ENCODE measurements at regions of chr9 and their contacts with region 1.

Region 1: GRCh38 chr9:137445275-137445807 is 4.2 kb upstream of the ENTPD8 start:
- DNase-seq: peak; percentile 76 to 93
- H3K4me3 ChIP-seq: no peak overlapping the region
- H3K27ac ChIP-seq: no peak overlapping the region
- H3K4me1 ChIP-seq: peaks cover 18% of the 10 kb centered on the region
- H3K27me3 ChIP-seq: no peaks in the 10 kb centered on the region
- CTCF ChIP-seq: peak; percentile 93

Region 2: GRCh38 chr9:136424750-136425362 is 1020.5 kb before region 1 on chr9:
- CTCF ChIA-PET with region 1: no interaction called
- POLR2A ChIA-PET with region 1: interaction called, 14 read pairs
- intact Hi-C with region 1: no loop called
- DNase-seq: no peak
- H3K4me3 ChIP-seq: no peak overlapping the region
- H3K27ac ChIP-seq: no peak overlapping the region
- H3K4me1 ChIP-seq: no peaks in the 10 kb centered on the region
- H3K27me3 ChIP-seq: no peaks in the 10 kb centered on the region
- CTCF ChIP-seq: no peak

Region 3: GRCh38 chr9:137286975-137287383 is 158.4 kb before region 1 on chr9:
- CTCF ChIA-PET with region 1: interaction called, 17 read pairs
- POLR2A ChIA-PET with region 1: no interaction called
- intact Hi-C with region 1: no loop called
- DNase-seq: peak; percentile 63 to 69
- H3K4me3 ChIP-seq: no peak overlapping the region
- H3K27ac ChIP-seq: no peak overlapping the region
- H3K4me1 ChIP-seq: no peaks in the 10 kb centered on the region
- H3K27me3 ChIP-seq: no peaks in the 10 kb centered on the region
- CTCF ChIP-seq: peak; percentile 74

Region 4: DNA sequence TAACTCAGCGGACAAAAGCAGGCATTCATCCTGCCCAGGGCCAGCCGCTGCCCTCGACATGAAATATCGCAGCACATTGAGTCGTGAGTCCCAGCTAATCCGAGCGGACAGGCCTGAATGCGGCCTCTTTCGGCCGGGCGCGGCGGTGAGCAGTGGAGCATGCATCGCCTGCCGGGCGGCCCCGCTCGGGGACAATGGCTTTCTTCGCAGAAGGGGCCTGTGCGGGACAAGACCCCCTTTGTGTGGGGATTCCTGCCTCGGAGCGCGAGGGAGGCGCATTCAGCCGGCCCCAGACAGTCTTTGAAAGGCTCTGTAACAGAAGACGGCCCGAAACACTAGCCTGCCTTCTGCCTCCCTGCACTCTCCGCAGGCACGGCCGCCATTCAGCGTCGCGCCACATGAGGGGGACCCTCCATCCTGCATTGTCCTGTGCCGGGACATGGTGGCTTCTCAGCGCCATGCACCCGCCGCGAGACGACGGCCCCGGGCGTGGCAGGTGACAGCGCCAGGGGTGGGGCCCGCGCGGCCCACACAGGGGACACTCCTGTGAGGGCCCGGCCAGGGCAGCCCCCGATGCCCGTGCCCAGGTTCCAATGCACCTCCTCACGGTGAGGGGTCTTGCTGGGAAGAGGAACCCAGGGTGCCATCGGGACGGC is 74.3 kb before region 1 on chr9:
- CTCF ChIA-PET with region 1: no interaction called
- POLR2A ChIA-PET with region 1: no interaction called
- intact Hi-C with region 1: no loop called
- DNase-seq: no peak
- H3K4me3 ChIP-seq: no peak overlapping the region
- H3K27ac ChIP-seq: no peak overlapping the region
- H3K4me1 ChIP-seq: no peaks in the 10 kb centered on the region
- H3K27me3 ChIP-seq: no peaks in the 10 kb centered on the region
- CTCF ChIP-seq: no peak

Region 5: DNA sequence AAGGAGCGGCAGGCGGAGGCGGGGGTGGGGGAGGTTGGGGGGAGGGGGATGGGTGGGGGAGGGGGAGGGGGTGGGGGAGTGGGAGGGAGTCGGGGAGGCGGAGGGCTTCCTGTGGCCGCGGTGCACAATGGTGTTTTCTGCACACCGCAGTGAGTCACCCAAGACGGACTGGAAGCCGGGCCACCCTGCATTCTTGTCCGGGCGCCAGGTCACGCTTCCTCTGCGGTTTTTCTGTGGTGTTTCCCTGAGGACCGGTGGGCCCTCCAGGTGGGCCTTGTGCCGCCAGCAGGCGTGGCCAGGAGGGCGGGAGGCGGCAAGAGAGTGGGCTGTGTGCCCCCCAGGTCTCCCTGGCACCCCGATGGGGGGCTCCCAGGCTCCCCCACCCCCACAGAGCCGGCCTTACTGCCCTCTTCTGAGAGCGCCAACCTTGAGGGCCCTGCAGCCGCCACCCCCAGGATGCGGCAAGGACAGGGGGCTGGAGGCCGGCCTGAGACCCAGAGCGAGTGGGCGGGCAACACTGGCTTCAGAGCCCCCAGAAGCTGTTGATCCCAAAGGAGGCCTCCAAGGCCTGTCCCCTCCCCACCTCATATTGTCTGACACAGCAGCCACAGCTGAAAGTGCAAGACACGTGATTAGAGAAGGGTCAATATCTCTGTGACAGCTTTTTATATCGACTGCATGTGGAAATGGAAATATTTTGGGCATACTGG is 33.5 kb before region 1 on chr9:
- CTCF ChIA-PET with region 1: no interaction called
- POLR2A ChIA-PET with region 1: no interaction called
- intact Hi-C with region 1: loop called (anchors 1 kb)
- DNase-seq: peak; percentile 87 to 93
- H3K4me3 ChIP-seq: peak overlapping the region; percentile 40; the same call in 1 of the 2 replicates
- H3K27ac ChIP-seq: peak overlapping the region; percentile 43; the same call in 1 of the 2 replicates
- H3K4me1 ChIP-seq: peaks cover 18% of the 10 kb centered on the region
- H3K27me3 ChIP-seq: no peaks in the 10 kb centered on the region
- CTCF ChIP-seq: no peak

Region 6: GRCh38 chr9:137534256-137535117 is 89.1 kb after region 1 on chr9:
- CTCF ChIA-PET with region 1: no interaction called
- POLR2A ChIA-PET with region 1: interaction called, 10 read pairs
- intact Hi-C with region 1: no loop called
- DNase-seq: peak; percentile 44 to 51
- H3K4me3 ChIP-seq: no peak overlapping the region
- H3K27ac ChIP-seq: no peak overlapping the region
- H3K4me1 ChIP-seq: peaks cover 4% of the 10 kb centered on the region
- H3K27me3 ChIP-seq: no peaks in the 10 kb centered on the region
- CTCF ChIP-seq: peak; percentile 65; the same call in 1 of the 2 replicates

Region 7: DNA sequence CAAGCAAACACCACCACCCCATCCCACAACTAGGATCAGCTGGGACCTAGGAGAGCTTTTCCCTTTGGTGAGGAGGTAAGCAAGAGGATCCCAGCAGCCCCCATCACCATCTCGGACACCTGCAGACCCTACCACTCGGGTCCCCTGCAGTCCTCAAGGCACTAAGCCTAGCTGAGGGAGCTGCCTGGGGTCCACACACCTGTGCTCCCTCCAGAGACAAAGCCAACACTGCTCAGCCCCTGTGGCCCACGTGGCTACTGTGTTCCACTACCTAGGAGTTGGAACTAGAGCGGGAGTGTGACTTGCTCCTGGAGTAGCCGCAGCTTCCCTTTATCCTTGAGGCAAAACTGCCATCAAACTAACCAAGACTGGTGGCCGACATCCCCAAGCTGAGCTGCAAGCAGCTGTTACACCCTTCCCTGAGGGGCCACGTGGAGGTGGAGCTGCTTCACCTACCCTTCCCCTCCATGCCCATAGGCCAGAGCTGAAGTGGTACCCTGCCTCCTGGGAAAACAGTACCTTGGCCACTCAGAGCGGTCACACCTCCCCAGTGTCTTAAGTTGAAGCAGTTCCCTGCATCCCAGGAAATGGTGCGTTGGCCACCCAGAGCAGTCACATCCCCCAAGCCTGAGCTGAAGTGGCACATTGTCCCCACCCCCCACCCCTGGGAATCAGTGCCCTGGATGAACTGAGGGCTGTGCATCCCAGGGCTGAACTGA is 637.7 kb after region 1 on chr9:
- CTCF ChIA-PET with region 1: no interaction called
- POLR2A ChIA-PET with region 1: no interaction called
- intact Hi-C with region 1: no loop called
- DNase-seq: no peak
- H3K4me3 ChIP-seq: no peak overlapping the region
- H3K27ac ChIP-seq: no peak overlapping the region
- H3K4me1 ChIP-seq: no peaks in the 10 kb centered on the region
- H3K27me3 ChIP-seq: peaks cover 36% of the 10 kb centered on the region
- CTCF ChIP-seq: no peak

Measured in PC-9 (cell line).